SK-N-SH (cell line): ENCODE measurements at regions of chr2 and their contacts with region 1.

Region 1: DNA sequence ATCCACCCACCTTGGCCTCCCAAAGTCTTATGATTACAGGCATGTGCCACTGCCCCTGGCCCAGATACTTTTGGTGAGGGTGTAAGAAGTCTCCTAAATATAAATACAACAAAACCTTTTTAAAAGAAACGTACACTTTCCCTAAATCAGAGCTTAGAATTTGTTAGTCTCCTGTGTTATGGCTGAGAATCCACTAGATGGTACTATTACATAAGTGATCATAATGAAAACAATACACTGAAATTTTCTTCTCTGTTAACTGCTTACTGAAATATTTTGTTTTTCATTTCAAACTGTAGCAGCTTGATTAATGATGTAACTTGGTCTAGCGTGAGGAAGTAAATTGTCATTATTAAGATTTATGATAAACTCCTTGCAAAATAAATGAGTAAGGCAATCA is 74.8 kb upstream of the FAM98A start:
- DNase-seq: peak; percentile 24
- H3K4me3 ChIP-seq: peak overlapping the region in 1 of 2 experiments; percentile 11; a peak in 1 of 4 replicates
- H3K27ac ChIP-seq: no peak overlapping the region
- H3K4me1 ChIP-seq: peaks cover 0 to 8% of the 10 kb centered on the region in 2 experiments; a peak in 2 of 4 replicates
- H3K27me3 ChIP-seq: no peaks in the 10 kb centered on the region
- CTCF ChIP-seq: peak; percentile 67
- EP300 ChIP-seq: no peak
- RAD21 ChIP-seq: peak; percentile 76

Region 2: DNA sequence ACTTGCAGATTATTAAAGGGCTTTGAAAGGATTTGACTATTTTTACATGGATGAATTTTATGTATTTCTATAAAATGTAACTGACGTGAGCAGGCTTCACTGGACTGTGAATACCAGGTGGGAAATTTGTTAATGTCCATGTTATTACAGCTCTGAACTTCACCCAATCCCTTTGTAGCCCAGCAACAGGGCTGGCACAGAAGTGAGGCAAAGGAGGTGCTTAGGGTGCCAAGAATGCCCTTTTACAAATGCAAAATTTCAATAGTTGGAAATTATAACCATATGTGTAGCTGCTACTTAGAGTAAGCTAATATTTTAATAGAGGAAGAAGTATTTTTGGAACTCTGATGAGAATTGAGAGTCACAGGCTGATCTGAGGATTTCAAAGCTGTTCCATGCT is 21.1 kb before region 1 on chr2:
- CTCF ChIA-PET with region 1: interaction called, 12 read pairs
- POLR2A ChIA-PET with region 1: no interaction called
- DNase-seq: no peak
- H3K4me3 ChIP-seq: no peak overlapping the region
- H3K27ac ChIP-seq: no peak overlapping the region
- H3K4me1 ChIP-seq: no peaks in the 10 kb centered on the region
- H3K27me3 ChIP-seq: no peaks in the 10 kb centered on the region
- CTCF ChIP-seq: no peak
- EP300 ChIP-seq: no peak
- RAD21 ChIP-seq: no peak

Region 3: GRCh38 chr2:33660426-33661118 is 13.4 kb before region 1 on chr2:
- CTCF ChIA-PET with region 1: interaction called, 16 read pairs
- POLR2A ChIA-PET with region 1: no interaction called
- DNase-seq: no peak
- H3K4me3 ChIP-seq: no peak overlapping the region
- H3K27ac ChIP-seq: no peak overlapping the region
- H3K4me1 ChIP-seq: no peaks in the 10 kb centered on the region
- H3K27me3 ChIP-seq: no peaks in the 10 kb centered on the region; the same call in 1 of the 2 replicates
- CTCF ChIP-seq: no peak
- EP300 ChIP-seq: no peak
- RAD21 ChIP-seq: no peak

Region 4: DNA sequence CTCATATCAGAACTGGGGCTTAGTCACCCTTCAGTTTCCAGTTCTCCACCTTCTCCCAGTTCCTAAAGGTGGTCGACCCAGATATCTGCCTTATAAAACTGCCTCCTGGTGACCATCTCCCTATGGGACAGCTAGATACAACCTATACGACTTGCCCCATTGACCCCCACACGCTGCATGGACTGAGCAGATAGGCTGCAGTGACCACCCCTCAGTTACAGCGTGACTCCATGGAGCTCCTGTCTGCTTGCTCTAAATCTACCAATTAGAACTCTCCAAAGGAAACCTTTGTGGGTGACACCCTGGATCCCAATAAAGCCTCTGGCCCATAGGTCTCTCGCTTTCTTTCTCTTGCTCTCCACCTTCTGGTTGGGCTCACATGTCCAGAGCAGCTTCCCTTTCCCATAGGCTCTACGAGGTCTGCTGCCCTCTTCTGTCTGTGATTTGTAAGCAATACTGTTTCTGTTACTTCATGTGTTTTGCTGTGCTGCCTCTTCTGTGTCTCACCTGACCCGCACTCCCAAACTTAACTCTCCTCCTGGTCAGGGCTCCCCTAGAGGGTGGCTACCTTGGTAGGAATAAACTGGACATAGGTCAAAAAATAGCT is 896.4 kb after region 1 on chr2:
- CTCF ChIA-PET with region 1: interaction called, 30 read pairs
- POLR2A ChIA-PET with region 1: no interaction called
- DNase-seq: peak; percentile 14
- H3K4me3 ChIP-seq: no peak overlapping the region
- H3K27ac ChIP-seq: no peak overlapping the region
- H3K4me1 ChIP-seq: no peaks in the 10 kb centered on the region
- H3K27me3 ChIP-seq: no peaks in the 10 kb centered on the region
- CTCF ChIP-seq: peak; percentile 36
- EP300 ChIP-seq: no peak
- RAD21 ChIP-seq: peak; percentile 57